Activated CD4-positive, alpha-beta T cell treated with anti-CD3 and anti-CD28 coated beads, Interleukin-2, amount 10 ng/mL, durations not matched to agents 24 days and 14 days (primary cell): ENCODE measurements at regions of chr6 and their contacts with region 1.

Region 1: GRCh38 chr6:16956361-16956760 is 145.5 kb upstream of the STMND1 start:
- DNase-seq: peak; percentile 63
- H3K4me3 Mint-ChIP-seq: peak overlapping the region; percentile 21
- H3K27ac Mint-ChIP-seq: peak overlapping the region; percentile 78
- H3K4me1 Mint-ChIP-seq: peaks cover 28% of the 10 kb centered on the region
- H3K27me3 Mint-ChIP-seq: peaks cover 21% of the 10 kb centered on the region

Region 2: DNA sequence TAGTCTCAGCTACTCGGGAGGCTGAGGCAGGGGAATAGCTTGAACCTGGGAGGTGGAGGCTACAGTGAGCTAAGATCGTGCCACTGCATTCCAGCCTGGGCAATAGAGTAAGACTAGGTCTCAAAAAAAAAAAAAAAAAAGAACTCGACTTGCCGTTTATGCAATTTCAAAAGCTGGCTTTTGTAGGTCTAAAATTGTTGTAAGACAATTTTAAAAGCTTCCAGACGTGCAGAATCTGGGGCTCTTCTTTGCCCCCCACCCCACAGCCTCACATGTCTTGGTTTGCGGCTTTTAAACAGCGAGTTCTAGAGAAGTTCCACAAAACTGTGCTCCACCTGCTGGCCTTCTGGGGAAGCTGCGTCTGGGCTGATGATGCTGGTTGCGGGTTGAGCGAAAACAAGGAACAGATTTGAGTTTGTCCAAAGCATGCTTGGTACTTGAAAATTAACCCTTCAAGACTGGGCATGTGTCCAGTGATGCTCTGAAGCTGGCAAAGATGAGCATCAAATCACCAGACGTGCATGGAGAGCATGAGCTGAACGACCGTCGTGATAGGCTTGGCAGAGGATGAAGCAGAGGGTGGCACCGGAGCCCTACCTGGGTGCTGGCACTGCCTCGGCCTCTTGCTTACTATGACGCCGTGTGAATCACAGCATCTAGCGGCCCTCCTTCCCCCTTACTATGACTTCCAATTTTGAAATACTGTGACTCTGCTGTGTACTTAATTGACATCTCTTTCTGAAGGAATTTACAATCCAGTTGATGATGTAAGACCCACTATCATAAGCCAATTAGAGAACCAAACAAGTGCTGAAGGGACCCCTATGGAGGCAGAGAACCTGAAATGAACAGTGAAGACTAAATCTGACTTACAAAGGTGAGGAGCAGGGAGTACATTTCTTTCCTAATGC is 546.6 kb before region 1 on chr6:
- intact Hi-C with region 1: loop called (anchors 10 kb)
- DNase-seq: peak; percentile 86
- H3K4me3 Mint-ChIP-seq: no peak overlapping the region
- H3K27ac Mint-ChIP-seq: peak overlapping the region; percentile 26
- H3K4me1 Mint-ChIP-seq: peaks cover 52% of the 10 kb centered on the region
- H3K27me3 Mint-ChIP-seq: no peaks in the 10 kb centered on the region

Region 3: DNA sequence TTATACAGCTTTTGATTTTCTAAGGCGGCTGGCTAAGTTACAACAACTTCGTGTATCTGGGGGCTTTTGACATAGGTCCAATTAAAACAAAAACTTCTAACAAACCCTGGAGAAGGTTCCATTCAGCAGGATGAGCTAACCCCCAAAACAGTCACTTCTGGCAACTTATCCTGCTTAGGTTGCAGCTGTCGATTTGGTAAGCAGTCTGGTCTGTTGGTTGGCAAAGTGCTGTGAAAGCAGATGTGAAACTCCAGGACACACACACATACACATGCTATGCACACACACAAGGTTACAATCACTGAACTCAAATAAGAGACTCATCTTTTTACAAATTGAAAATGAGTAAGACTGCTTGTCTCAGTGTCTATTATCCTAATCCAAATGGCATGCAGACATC is 26.4 kb after region 1 on chr6:
- intact Hi-C with region 1: no loop called
- DNase-seq: no peak
- H3K4me3 Mint-ChIP-seq: no peak overlapping the region
- H3K27ac Mint-ChIP-seq: no peak overlapping the region
- H3K4me1 Mint-ChIP-seq: no peaks in the 10 kb centered on the region
- H3K27me3 Mint-ChIP-seq: peaks cover 33% of the 10 kb centered on the region

Region 4: GRCh38 chr6:17054663-17055062 is 98.3 kb after region 1 on chr6:
- intact Hi-C with region 1: no loop called
- DNase-seq: no peak
- H3K4me3 Mint-ChIP-seq: no peak overlapping the region
- H3K27ac Mint-ChIP-seq: no peak overlapping the region
- H3K4me1 Mint-ChIP-seq: no peaks in the 10 kb centered on the region
- H3K27me3 Mint-ChIP-seq: peaks cover 4% of the 10 kb centered on the region

Region 5: DNA sequence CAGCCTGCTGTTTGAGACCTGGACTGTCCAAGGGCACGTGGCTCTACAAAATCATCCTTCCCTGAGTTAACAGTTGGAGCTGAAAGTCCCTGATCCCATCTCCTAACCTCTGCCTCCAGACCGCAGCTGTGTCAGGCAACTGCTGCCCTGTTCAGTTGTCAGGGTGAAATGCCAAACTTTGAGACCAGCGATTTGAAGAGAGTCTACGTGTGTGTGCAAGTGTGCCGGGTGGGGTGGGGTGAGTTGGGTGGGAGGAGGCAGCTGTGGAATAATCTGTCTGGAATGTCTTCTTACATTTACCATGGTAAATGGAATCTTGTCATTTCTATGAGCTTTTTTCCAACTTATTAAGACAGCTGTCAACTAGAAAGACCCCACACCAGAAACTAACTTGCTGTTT is 562.8 kb after region 1 on chr6:
- intact Hi-C with region 1: no loop called
- DNase-seq: no peak
- H3K4me3 Mint-ChIP-seq: no peak overlapping the region
- H3K27ac Mint-ChIP-seq: no peak overlapping the region
- H3K4me1 Mint-ChIP-seq: no peaks in the 10 kb centered on the region
- H3K27me3 Mint-ChIP-seq: no peaks in the 10 kb centered on the region